Dendritic cell treated with granulocyte-macrophage colony-stimulating factor and Interleukin-4, amounts not matched to agents 40 ng/mL and 50 ng/mL, for 4 days (primary cell): ENCODE measurements at regions of chr17 and their contacts with region 1.

Region 1: GRCh38 chr17:74646231-74646630 is 22.7 kb upstream of the CD300E start:
- H3K4me3 Mint-ChIP-seq: no peak overlapping the region
- H3K27ac Mint-ChIP-seq: no peak overlapping the region
- H3K4me1 Mint-ChIP-seq: peaks cover 52% of the 10 kb centered on the region
- H3K27me3 Mint-ChIP-seq: peaks cover 69% of the 10 kb centered on the region

Region 2: DNA sequence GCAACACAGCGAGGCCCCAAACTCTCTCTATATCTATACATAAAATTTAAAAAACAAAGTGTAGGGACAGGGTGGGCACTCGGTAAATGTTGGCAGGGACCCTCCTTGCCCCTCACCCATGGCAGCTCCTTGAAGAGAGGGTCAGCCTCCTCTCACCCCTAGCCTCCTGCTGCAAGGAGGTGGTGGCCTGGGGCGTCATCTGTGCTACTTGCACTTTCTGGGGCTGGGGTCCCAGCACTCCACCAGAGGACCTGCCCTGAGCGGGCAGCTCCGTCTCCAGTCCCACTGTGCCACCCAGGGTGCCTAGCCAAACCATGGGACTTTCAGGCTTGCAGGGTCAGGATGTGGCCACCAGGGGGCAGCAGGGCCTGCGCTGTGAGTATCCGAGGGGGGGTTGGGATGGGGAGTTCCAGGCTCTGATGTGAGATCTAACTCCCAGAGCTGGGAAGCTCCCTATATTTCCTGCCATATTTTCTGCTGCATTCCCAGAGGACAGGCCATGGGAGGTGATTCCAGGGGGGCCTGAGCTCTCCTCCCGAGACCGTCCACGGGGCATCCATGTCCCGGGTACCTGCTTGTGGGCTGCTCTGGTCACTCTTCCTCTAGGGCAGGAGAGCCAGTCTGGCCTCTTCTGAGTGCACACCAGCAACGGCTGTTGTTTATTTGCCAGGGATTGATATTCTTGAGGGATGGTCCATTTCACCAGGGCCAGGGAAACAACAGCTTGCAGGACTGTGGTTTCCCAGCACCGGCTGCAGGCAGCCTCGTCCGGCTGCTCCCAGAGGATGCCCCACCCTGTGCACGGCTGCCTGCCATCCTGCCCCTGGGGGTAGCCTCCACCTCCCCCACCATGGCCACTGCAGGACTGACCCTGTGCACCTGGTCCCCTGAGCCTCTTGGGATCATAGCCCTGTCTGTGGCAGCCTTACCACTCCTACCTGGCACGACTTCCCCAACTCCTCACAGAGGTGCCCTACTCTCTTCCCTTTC is 277.8 kb before region 1 on chr17:
- intact Hi-C with region 1: loop called (anchors 5 kb)
- H3K4me3 Mint-ChIP-seq: no peak overlapping the region
- H3K27ac Mint-ChIP-seq: peak overlapping the region; percentile 53
- H3K4me1 Mint-ChIP-seq: peaks cover 19% of the 10 kb centered on the region
- H3K27me3 Mint-ChIP-seq: peaks cover 61% of the 10 kb centered on the region

Region 3: DNA sequence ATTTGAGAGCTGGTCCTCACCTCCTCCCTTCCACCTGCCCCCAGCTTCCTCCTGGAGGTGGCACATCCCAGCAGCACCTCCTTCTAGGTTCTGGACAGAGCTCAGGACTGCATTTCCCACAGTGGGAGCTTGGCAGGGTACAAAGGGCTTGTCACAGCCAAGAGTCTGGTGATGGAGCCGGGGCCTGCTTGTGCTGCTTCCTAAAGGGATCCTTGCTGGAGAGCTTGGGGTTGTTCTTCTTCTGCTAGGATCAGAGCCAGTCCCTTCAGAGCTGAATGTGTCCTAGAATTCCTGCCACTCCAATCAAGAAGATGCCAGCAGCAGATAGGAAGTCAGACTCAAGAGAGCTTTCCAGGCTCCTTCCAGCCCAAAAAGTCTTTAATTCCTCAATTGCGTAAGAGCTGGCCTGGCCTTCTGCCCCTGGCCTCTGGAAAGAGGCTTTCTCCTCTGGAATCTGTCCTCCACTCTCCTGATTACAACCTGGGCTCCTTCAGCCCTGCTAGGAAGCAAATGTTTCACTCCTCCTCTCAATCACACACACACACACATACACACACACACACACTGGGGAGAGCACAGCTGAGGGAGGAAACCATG is 27.1 kb before region 1 on chr17:
- intact Hi-C with region 1: no loop called
- H3K4me3 Mint-ChIP-seq: no peak overlapping the region
- H3K27ac Mint-ChIP-seq: peak overlapping the region; percentile 25
- H3K4me1 Mint-ChIP-seq: peaks cover 91% of the 10 kb centered on the region
- H3K27me3 Mint-ChIP-seq: peaks cover 32% of the 10 kb centered on the region